ENCODE measurements at regions of chr19 and their contacts with region 1.

Region 1: GRCh38 chr19:10184636-10185035 is 10.1 kb downstream of the DNMT1 start:
- H3K4me3 ChIP-seq: no peak overlapping the region
- H3K27ac ChIP-seq: peak overlapping the region; percentile 37; the same call in 1 of the 2 replicates
- H3K4me1 ChIP-seq: no peaks in the 10 kb centered on the region
- CTCF ChIP-seq: no peak

Region 2: DNA sequence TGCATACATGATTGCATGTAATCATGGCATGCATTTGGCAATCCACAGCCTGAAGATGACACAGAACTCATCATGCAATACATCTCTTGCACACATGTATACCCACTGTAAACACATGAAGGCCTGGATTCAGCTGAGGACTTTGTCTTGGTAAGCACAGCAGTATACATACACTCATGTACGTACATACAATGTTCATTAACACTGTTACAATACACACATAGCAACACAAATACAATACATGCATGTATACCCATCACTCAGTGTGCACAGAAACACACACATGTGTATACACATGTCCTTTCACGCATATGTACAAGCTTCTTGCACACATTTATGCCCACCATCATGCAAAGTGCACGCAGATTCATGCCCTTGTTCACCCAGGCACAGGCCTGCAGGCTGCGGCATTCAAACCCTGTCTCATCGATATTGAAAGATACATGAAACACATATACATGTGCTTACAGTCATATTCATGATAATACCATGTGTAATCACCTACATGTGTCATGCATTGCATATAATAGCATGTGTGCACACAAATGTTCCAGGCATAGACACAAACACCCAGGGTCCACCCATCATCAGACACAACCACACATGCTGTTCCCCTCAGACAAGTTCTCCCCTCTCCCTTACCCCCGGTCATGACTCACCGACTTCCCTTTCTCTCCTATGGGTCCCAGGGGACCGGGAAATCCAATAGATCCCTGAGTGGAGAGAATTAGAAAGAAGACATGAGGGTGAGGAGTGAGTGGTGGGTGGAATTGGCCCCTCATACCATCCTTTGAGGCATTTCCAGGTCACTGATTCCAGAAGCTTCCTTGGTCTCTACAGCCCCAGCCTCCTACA is 203.0 kb before region 1 on chr19:
- CTCF ChIA-PET with region 1: interaction called, 10 read pairs
- POLR2A ChIA-PET with region 1: no interaction called
- H3K4me3 ChIP-seq: no peak overlapping the region
- H3K27ac ChIP-seq: no peak overlapping the region
- H3K4me1 ChIP-seq: no peaks in the 10 kb centered on the region
- CTCF ChIP-seq: no peak

Region 3: GRCh38 chr19:10142701-10143375 is 41.8 kb before region 1 on chr19:
- CTCF ChIA-PET with region 1: no interaction called
- POLR2A ChIA-PET with region 1: no interaction called
- H3K4me3 ChIP-seq: no peak overlapping the region
- H3K27ac ChIP-seq: no peak overlapping the region
- H3K4me1 ChIP-seq: no peaks in the 10 kb centered on the region
- CTCF ChIP-seq: no peak